ENCODE measurements at regions of chr6 and their contacts with region 1.

Region 1: DNA sequence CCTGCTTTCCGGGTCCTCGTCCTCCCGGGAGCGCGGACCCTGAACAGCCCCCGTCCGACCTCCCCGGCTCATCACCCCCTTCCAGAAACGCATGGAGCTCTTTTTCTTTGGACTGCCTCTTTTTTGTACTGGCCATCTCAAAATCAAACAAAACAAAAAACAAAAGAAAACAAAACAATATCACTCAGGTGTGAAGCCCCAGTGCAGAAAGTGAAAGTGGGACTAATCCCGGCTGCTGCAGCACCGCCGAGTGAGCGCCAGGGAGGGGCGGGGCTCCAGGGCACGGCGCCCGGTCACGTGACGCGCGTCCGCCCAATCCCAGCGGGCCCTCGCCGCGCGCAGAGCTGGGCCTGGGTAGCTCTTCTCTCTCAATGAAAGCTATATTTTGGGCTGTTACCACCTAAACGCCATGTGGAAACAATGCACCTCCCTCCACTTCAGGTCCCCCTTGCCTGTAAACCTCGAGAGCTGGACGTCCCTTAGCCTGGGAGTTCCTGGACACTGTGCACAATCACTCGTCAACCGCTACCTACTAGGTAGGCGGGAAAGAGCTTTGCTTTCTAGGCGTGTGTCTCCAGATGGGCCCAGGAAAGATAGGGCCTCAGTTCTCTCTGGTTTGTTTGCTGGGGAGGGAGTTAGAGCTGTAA is 93.7 kb upstream of the PRDM1 start:
- DNase-seq: peak; percentile 73 to 95 (median 86)
- ATAC-seq: peak; percentile 88
- H3K4me3 ChIP-seq: peak overlapping the region; percentile 70 to 90
- H3K4me3 Mint-ChIP-seq: peak overlapping the region; percentile 94
- H3K27ac ChIP-seq: peak overlapping the region; percentile 42 to 80
- H3K27ac Mint-ChIP-seq: peak overlapping the region; percentile 94
- H3K4me1 ChIP-seq: peaks cover 32% of the 10 kb centered on the region
- H3K4me1 Mint-ChIP-seq: peaks cover 27% of the 10 kb centered on the region
- H3K27me3 ChIP-seq: peaks cover 5 to 33% of the 10 kb centered on the region in 2 experiments
- H3K27me3 Mint-ChIP-seq: peaks cover 63% of the 10 kb centered on the region
- CTCF ChIP-seq: no peak

Region 2: GRCh38 chr6:104859225-104860146 is 1133.0 kb before region 1 on chr6 and contains the start of gene HACE1:
- CTCF ChIA-PET with region 1: no interaction called
- POLR2A ChIA-PET with region 1: no interaction called
- intact Hi-C with region 1: loop called in 1 of 2 experiments (anchors 5 kb)
- DNase-seq: peak; percentile 74 to 92 (median 89)
- ATAC-seq: peak; percentile 97
- H3K4me3 ChIP-seq: peak within 1 kb of the TSS; percentile 80 to 83
- H3K4me3 Mint-ChIP-seq: peak within 1 kb of the TSS; percentile 93
- H3K27ac ChIP-seq: peak within 1 kb of the TSS; percentile 26 to 56
- H3K27ac Mint-ChIP-seq: peak within 1 kb of the TSS; percentile 85
- H3K4me1 ChIP-seq: peaks cover 10% of the 10 kb centered on the region
- H3K4me1 Mint-ChIP-seq: peaks cover 17% of the 10 kb centered on the region
- H3K27me3 ChIP-seq: no peaks in the 10 kb centered on the region
- H3K27me3 Mint-ChIP-seq: peaks cover 10% of the 10 kb centered on the region
- CTCF ChIP-seq: no peak
- total RNA-seq, gene HACE1: 8.4 to 9.0 TPM

Region 3: GRCh38 chr6:105452924-105453756 is 539.3 kb before region 1 on chr6:
- CTCF ChIA-PET with region 1: no interaction called
- POLR2A ChIA-PET with region 1: interaction called, 3 read pairs
- intact Hi-C with region 1: loop called in 1 of 2 experiments (anchors 10 kb)
- DNase-seq: peak; percentile 24 to 90 (median 61)
- ATAC-seq: peak; percentile 96
- H3K4me3 ChIP-seq: peak overlapping the region; percentile 18 to 56
- H3K4me3 Mint-ChIP-seq: peak overlapping the region; percentile 78
- H3K27ac ChIP-seq: peak overlapping the region; percentile 51 to 91
- H3K27ac Mint-ChIP-seq: peak overlapping the region; percentile 94
- H3K4me1 ChIP-seq: peaks cover 23% of the 10 kb centered on the region
- H3K4me1 Mint-ChIP-seq: peaks cover 41% of the 10 kb centered on the region
- H3K27me3 ChIP-seq: no peaks in the 10 kb centered on the region
- H3K27me3 Mint-ChIP-seq: no peaks in the 10 kb centered on the region
- CTCF ChIP-seq: no peak

Region 4: DNA sequence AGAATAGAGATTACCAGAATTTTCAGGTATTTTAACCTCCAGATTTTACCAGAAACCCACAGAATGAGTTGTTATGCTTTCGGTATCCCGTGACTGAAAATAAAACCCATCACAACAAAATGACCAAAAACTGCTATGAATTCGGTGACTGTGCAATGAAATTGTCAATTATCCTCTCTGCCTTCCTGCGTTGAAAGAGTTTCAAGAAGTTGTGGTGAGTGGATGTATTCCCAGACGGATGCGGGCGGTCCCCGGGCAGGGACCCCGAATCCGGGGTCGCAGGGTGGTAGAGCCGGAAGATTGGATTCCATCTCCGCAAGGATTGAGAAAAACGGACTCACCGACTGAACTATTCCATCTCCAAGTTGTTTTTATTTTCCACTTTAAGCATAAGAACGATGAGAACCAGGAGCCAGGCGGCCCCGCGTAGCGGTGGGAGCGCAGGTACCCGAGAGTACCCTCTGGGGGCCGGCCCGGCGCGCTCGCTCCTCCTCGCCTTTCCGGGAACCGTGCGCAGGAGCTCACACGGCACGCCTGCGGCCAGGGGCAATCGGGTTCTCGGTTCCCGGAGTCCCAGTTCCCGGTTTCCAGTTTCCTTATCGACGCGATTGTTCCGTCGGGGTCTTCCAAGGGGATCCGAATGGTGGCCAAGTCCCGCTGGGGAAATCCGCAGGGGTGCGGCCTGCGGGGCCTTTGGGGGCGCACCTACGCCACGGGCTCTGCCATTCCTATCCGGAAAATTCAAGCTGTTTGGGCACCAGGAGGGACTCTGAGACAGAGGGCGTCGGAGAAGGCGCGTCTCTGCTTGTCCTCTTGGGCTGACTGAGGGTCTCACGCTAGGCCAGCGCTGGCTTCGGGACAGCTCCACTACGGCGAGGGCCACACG is 11.2 kb before region 1 on chr6:
- CTCF ChIA-PET with region 1: interaction called, 5 read pairs
- POLR2A ChIA-PET with region 1: interaction called, 14 read pairs
- intact Hi-C with region 1: no loop called
- DNase-seq: peak in 5 of 9 experiments; percentile 34 to 66 (median 50)
- ATAC-seq: peak; percentile 72
- H3K4me3 ChIP-seq: peak overlapping the region; percentile 31 to 50
- H3K4me3 Mint-ChIP-seq: peak overlapping the region; percentile 82
- H3K27ac ChIP-seq: no peak overlapping the region
- H3K27ac Mint-ChIP-seq: peak overlapping the region; percentile 24
- H3K4me1 ChIP-seq: peaks cover 18% of the 10 kb centered on the region
- H3K4me1 Mint-ChIP-seq: peaks cover 23% of the 10 kb centered on the region
- H3K27me3 ChIP-seq: peaks cover 18 to 21% of the 10 kb centered on the region in 2 experiments
- H3K27me3 Mint-ChIP-seq: peaks cover 55% of the 10 kb centered on the region
- CTCF ChIP-seq: no peak

Region 5: DNA sequence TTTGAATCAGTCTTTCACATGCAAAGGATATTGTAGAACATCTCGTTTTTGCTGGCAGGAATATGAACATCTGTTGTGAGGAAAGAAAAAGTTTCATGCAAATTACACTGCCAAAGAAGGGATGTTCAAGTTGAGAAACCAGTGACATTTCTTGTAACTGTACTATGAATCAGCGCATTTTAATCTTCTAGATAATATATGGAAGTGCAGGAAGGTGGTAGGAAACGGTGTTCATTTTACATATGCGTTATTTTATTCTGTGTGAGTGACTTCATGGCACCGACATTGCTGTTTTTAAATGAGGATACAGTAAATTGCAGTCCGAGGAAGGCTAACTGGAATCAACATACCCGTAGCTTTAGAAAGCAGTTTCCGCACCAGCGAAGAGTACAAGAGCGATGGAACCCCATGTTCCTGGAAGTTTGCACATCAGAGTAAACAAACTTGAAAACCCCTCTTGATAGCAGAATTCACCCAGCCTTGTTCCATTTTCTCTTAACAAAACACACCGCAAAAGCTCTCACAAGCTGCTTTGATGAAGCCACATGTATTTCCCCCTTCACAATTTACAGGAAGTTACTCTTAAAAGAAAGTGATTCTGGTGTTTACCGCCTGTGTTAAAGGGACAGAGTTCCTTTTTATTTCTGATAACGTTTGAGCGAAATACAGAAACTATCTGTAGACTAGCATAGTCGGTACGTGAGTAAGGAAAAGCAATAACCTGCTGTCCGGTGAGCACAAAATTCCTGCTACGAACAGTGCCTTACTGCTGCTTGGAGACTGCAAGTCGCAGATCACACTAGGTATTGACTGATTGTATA is 105.2 kb after region 1 on chr6:
- CTCF ChIA-PET with region 1: no interaction called
- POLR2A ChIA-PET with region 1: interaction called, 13 read pairs
- intact Hi-C with region 1: loop called (anchors 1 to 5 kb)
- DNase-seq: peak in 7 of 9 experiments; percentile 37 to 93 (median 66)
- ATAC-seq: peak; percentile 65
- H3K4me3 ChIP-seq: peak overlapping the region; percentile 49 to 73
- H3K4me3 Mint-ChIP-seq: peak overlapping the region; percentile 90
- H3K27ac ChIP-seq: peak overlapping the region; percentile 42 to 79
- H3K27ac Mint-ChIP-seq: peak overlapping the region; percentile 92
- H3K4me1 ChIP-seq: peaks cover 39% of the 10 kb centered on the region
- H3K4me1 Mint-ChIP-seq: peaks cover 75% of the 10 kb centered on the region
- H3K27me3 ChIP-seq: no peaks in the 10 kb centered on the region
- H3K27me3 Mint-ChIP-seq: peaks cover 4% of the 10 kb centered on the region
- CTCF ChIP-seq: no peak

Region 6: GRCh38 chr6:106194949-106195921 is 202.8 kb after region 1 on chr6:
- CTCF ChIA-PET with region 1: no interaction called
- POLR2A ChIA-PET with region 1: no interaction called
- intact Hi-C with region 1: loop called (anchors 5 to 10 kb)
- DNase-seq: peak in 6 of 9 experiments; percentile 12 to 79 (median 44)
- ATAC-seq: peak; percentile 82
- H3K4me3 ChIP-seq: peak overlapping the region in 1 of 2 experiments; percentile 12
- H3K4me3 Mint-ChIP-seq: peak overlapping the region; percentile 46
- H3K27ac ChIP-seq: peak overlapping the region; percentile 13 to 71
- H3K27ac Mint-ChIP-seq: peak overlapping the region; percentile 81
- H3K4me1 ChIP-seq: peaks cover 35% of the 10 kb centered on the region
- H3K4me1 Mint-ChIP-seq: peaks cover 37% of the 10 kb centered on the region
- H3K27me3 ChIP-seq: no peaks in the 10 kb centered on the region
- H3K27me3 Mint-ChIP-seq: no peaks in the 10 kb centered on the region
- CTCF ChIP-seq: no peak

Region 7: DNA sequence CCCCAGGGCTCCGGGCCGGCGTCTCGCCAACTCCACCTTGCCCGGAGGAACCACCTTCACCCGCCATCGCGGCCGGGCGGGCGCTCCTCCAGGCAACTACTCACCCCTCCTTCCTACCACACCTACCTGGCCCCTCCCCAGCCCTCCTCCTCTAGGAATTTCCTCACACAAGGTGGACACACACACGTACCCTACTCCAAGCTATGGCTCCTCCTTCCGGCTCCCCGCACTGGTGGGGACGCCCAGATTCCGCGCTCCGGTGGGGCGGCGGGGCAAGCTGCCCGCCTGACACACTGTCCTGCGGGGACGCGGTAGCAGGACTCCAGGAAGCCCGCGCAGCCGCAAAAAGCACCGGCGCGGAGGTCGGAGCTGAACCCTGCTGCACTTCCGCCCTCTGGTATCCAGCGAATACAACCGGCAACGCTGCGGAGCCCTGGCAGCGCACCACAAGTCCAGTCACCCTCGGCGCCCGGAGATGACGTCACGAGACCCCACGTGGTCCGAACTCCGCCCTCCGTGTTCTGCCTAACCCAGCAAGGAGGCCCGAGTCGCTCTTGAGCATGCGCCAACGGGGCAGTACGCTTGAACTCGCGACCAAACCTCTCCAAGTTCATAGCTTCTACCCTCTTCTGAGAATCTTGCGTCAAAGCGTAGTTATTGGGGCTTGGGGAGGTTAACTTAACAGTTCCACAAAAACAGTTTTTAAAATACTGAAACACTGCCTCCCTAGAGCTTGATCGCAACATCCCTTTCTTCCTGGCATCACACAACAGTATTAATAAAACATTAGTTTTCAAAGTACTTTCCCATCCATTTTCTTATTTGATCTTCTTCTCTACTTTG is 333.1 kb after region 1 on chr6 and contains the start of gene ATG5:
- CTCF ChIA-PET with region 1: no interaction called
- POLR2A ChIA-PET with region 1: no interaction called
- intact Hi-C with region 1: loop called (anchors 2 to 5 kb)
- DNase-seq: peak; percentile 99 to 100 (median 100)
- ATAC-seq: peak; percentile 91
- H3K4me3 ChIP-seq: peak within 1 kb of the TSS; percentile 94 to 96
- H3K4me3 Mint-ChIP-seq: peak within 1 kb of the TSS; percentile 99
- H3K27ac ChIP-seq: peak within 1 kb of the TSS; percentile 90
- H3K27ac Mint-ChIP-seq: peak within 1 kb of the TSS; percentile 96
- H3K4me1 ChIP-seq: peaks cover 28% of the 10 kb centered on the region
- H3K4me1 Mint-ChIP-seq: peaks cover 47% of the 10 kb centered on the region
- H3K27me3 ChIP-seq: no peaks in the 10 kb centered on the region
- H3K27me3 Mint-ChIP-seq: peaks cover 12% of the 10 kb centered on the region
- CTCF ChIP-seq: no peak
- total RNA-seq, gene ATG5: 28.7 to 28.9 TPM

Region 8: DNA sequence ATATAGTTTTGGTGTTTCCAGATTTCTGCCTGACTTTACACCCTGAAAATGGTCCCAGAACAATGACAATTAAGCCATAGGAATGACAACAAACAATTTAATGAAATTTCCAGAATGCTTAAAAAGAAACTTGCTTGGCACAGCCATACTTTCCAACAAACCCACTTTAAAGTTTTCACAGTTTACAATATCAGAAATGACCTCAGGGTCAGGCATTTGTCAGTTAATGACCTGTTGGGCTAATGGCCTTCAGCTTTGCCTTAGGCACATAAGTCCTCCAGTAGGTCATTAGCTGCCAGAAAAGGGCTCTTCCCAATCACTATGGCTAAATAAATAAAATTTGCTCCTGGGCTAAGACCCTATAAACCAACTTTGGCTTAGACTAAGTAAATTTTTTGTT is 1267.5 kb after region 1 on chr6:
- CTCF ChIA-PET with region 1: no interaction called
- POLR2A ChIA-PET with region 1: no interaction called
- intact Hi-C with region 1: no loop called
- DNase-seq: no peak
- ATAC-seq: no peak
- H3K4me3 ChIP-seq: no peak overlapping the region
- H3K4me3 Mint-ChIP-seq: no peak overlapping the region
- H3K27ac ChIP-seq: no peak overlapping the region
- H3K27ac Mint-ChIP-seq: no peak overlapping the region
- H3K4me1 ChIP-seq: no peaks in the 10 kb centered on the region
- H3K4me1 Mint-ChIP-seq: no peaks in the 10 kb centered on the region
- H3K27me3 ChIP-seq: no peaks in the 10 kb centered on the region
- H3K27me3 Mint-ChIP-seq: no peaks in the 10 kb centered on the region
- CTCF ChIP-seq: no peak